ENCODE measurements at regions of chr11 and their contacts with region 1.

Region 1: GRCh38 chr11:72430741-72431570 is 3.4 kb downstream of the CLPB start:
- DNase-seq: peak; percentile 60
- ATAC-seq: peak; percentile 19
- H3K4me3 Mint-ChIP-seq: no peak overlapping the region
- H3K27ac Mint-ChIP-seq: no peak overlapping the region
- H3K4me1 Mint-ChIP-seq: peaks cover 31% of the 10 kb centered on the region
- H3K27me3 Mint-ChIP-seq: no peaks in the 10 kb centered on the region
- CTCF ChIP-seq: peak; percentile 77

Region 2: GRCh38 chr11:72102946-72103753 is 327.8 kb before region 1 on chr11 and contains the start of gene LAMTOR1:
- CTCF ChIA-PET with region 1: no interaction called
- POLR2A ChIA-PET with region 1: no interaction called
- intact Hi-C with region 1: no loop called
- DNase-seq: peak; percentile 100
- ATAC-seq: peak; percentile 97
- H3K4me3 Mint-ChIP-seq: peak within 1 kb of the TSS; percentile 95
- H3K27ac Mint-ChIP-seq: peak within 1 kb of the TSS; percentile 96
- H3K4me1 Mint-ChIP-seq: peaks cover 37% of the 10 kb centered on the region
- H3K27me3 Mint-ChIP-seq: no peaks in the 10 kb centered on the region
- CTCF ChIP-seq: no peak
- total RNA-seq, gene LAMTOR1: 50.3 to 52.4 TPM

Region 3: GRCh38 chr11:72305891-72306585 is 124.9 kb before region 1 on chr11:
- CTCF ChIA-PET with region 1: interaction called, 12 read pairs
- POLR2A ChIA-PET with region 1: no interaction called
- intact Hi-C with region 1: no loop called
- DNase-seq: no peak
- ATAC-seq: no peak
- H3K4me3 Mint-ChIP-seq: no peak overlapping the region
- H3K27ac Mint-ChIP-seq: no peak overlapping the region
- H3K4me1 Mint-ChIP-seq: no peaks in the 10 kb centered on the region
- H3K27me3 Mint-ChIP-seq: no peaks in the 10 kb centered on the region
- CTCF ChIP-seq: no peak

Region 4: DNA sequence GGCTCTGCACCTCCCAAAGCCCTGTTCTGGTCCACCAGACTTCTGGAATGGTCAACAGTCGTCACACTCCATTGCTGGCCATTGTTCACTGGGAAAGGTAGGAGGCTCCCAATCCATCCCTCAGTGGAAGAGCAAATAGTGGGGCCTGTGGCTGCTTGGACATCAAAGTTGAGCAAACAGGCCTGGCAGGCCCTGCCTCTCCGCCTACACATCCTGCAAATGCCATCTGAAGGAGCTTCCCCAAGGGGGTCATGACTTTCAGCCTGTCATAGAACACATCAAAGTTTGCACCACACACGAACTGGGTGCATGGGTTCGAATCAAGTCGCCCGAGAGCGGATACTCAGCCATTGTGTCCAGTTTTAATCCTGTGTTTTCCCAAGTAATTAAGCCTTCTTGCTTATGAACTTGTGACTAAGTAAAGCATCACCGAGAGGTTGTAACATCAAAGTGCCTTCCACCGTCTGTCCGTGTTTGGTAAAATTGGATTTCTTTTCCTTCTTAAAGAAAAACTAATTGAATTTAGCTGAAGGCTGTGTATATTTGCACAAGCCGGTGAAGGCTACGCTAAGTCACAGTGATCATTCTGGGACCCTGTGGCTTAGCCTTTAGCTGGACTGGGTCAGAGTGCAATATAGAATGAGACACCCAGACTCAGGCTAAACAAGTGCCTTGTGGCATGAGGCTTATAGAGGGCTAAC is 32.7 kb before region 1 on chr11:
- CTCF ChIA-PET with region 1: interaction called, 10 read pairs
- POLR2A ChIA-PET with region 1: no interaction called
- intact Hi-C with region 1: no loop called
- DNase-seq: no peak
- ATAC-seq: no peak
- H3K4me3 Mint-ChIP-seq: no peak overlapping the region
- H3K27ac Mint-ChIP-seq: no peak overlapping the region
- H3K4me1 Mint-ChIP-seq: no peaks in the 10 kb centered on the region
- H3K27me3 Mint-ChIP-seq: no peaks in the 10 kb centered on the region
- CTCF ChIP-seq: no peak

Region 5: DNA sequence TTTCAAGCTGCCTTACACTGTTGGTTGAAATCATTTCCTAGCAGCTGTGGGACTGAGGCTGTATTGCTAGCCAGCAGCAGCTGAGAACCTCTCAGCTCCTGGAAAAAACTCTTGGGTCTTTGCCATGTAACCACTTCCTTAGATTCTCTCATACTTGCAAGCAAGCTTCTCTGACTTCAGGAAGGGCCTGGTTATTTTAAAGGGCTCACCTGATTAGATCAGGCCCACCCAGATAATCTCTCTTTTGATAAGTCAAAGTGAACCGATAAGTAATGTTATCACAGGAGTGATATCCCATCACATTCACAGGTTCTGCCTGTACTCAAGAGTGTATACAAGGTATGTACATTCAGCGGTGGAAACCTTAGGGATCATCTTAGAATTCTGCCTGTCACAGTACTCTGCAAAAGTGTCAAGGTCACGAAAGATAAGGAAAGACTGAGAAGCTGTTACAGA is 10.8 kb after region 1 on chr11:
- CTCF ChIA-PET with region 1: interaction called, 17 read pairs
- POLR2A ChIA-PET with region 1: no interaction called
- intact Hi-C with region 1: no loop called
- DNase-seq: no peak
- ATAC-seq: no peak
- H3K4me3 Mint-ChIP-seq: no peak overlapping the region
- H3K27ac Mint-ChIP-seq: no peak overlapping the region
- H3K4me1 Mint-ChIP-seq: peaks cover 3% of the 10 kb centered on the region
- H3K27me3 Mint-ChIP-seq: no peaks in the 10 kb centered on the region
- CTCF ChIP-seq: no peak

Measured in activated CD8-positive, alpha-beta T cell treated with anti-CD3 and anti-CD28 coated beads for 36 hours (primary cell).